CD14-positive monocyte (primary cell): ENCODE measurements at regions of chr9 and their contacts with region 1.

Region 1: DNA sequence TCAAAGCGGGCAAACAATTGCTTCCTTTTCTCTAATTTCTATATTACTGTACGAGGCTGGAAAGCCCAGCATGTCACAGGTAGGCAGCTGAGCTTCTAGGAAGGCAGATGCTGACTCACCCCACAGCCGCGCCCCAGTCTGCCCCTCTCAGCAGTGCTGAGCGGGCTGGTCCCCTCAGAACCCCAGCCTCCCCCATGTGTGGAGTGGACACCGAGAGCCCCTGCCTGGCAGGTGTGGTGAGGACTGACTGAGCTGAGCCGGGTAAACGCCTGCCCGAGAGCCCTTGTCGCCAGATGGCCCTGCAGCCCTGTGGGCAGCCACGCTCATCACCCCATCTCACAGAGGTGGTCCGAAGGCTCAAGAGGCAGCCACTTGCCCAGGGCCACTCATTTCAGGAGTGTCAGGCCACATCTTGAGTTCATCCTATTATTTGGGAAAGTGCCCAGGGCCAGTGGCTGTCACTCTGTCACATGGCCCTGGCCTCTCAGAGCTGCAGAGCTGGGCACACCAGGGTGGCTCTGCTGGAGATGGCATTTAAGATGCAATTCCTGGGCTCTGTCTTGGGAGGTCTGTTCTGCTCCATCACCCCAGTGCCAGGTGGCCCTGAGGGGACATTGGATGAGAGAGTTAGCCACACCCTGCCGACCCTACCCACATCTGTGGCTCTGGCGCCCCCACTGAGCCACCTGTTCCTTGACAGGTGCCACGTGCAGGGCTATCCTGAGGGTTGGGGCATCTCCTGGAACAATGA is 12.4 kb downstream of the CARD19 start:
- DNase-seq: peak in 1 of 3 donors; percentile 70
- H3K4me3 ChIP-seq: no peak overlapping the region
- H3K4me3 Mint-ChIP-seq: peak overlapping the region in 1 of 2 donors; percentile 27
- H3K27ac ChIP-seq: peak overlapping the region; percentile 98 to 100
- H3K27ac Mint-ChIP-seq: peak overlapping the region; percentile 97 to 100 (median 99)
- H3K4me1 ChIP-seq: peaks cover 53 to 64% of the 10 kb centered on the region in 2 donors
- H3K4me1 Mint-ChIP-seq: peaks cover 87% of the 10 kb centered on the region
- H3K27me3 ChIP-seq: no peaks in the 10 kb centered on the region
- H3K27me3 Mint-ChIP-seq: peaks cover 0 to 3% (median 0%) of the 10 kb centered on the region in 3 donors
- CTCF ChIP-seq: no peak

Region 2: DNA sequence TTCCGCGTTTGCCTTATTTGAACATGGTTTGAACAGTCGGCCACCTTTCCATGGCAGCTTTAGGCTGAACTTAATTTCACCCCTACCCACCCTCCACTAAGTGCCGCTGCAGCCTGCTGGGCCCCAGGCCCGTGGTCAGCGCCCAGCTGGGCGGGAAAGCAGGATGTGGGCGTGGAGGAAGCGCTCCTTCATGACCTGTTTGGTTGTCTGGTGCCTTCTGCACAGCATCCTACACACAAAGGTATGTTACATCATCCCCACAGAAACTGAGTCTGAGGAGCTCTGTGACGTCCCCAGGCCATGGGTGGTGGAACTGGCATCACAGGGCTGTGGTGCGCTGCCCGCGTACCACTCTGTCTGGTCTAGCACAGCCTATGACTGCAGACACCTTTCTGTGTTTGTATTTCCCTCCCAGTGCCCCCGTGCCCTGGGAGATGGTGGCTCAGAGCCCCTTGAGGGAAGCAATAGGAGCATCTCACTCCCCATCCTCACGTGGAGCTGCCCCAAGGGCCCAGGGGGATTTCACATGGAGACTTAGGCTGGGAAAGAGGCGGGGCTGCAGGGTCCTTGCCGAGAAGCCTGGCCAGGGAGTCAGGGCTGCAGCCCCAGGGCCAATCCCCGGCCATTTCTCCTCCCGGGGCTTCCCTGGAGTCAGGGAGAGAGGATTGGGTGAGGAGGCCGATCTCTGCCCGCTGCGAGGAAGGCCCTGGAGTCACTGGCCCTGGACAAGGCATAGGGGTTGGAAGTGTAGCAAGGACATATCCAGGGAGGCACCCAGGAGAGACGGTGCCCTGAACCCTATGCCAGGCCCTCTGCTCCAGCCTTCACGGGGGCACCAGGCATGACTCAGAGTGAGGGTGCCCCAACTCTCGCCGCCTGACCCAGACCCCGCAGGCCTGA is 87.4 kb before region 1 on chr9:
- intact Hi-C with region 1: no loop called
- DNase-seq: no peak
- H3K4me3 ChIP-seq: no peak overlapping the region
- H3K4me3 Mint-ChIP-seq: no peak overlapping the region
- H3K27ac ChIP-seq: peak overlapping the region in 1 of 2 donors; percentile 53
- H3K27ac Mint-ChIP-seq: peak overlapping the region in 2 of 7 donors; percentile 40 to 72
- H3K4me1 ChIP-seq: peaks cover 22 to 27% of the 10 kb centered on the region in 2 donors
- H3K4me1 Mint-ChIP-seq: peaks cover 32% of the 10 kb centered on the region
- H3K27me3 ChIP-seq: no peaks in the 10 kb centered on the region
- H3K27me3 Mint-ChIP-seq: peaks cover 0 to 1% (median 0%) of the 10 kb centered on the region in 3 donors
- CTCF ChIP-seq: no peak

Region 3: GRCh38 chr9:93154315-93154903 is 45.9 kb after region 1 on chr9:
- intact Hi-C with region 1: loop called in 1 of 2 experiments (anchors 5 kb)
- DNase-seq: peak in 2 of 3 donors; percentile 42 to 63
- H3K4me3 ChIP-seq: no peak overlapping the region
- H3K4me3 Mint-ChIP-seq: no peak overlapping the region
- H3K27ac ChIP-seq: no peak overlapping the region
- H3K27ac Mint-ChIP-seq: peak overlapping the region in 1 of 7 donors; percentile 64
- H3K4me1 ChIP-seq: peaks cover 0 to 3% of the 10 kb centered on the region in 2 donors
- H3K4me1 Mint-ChIP-seq: peaks cover 6% of the 10 kb centered on the region
- H3K27me3 ChIP-seq: no peaks in the 10 kb centered on the region
- H3K27me3 Mint-ChIP-seq: peaks cover 0 to 3% (median 0%) of the 10 kb centered on the region in 3 donors
- CTCF ChIP-seq: peak; percentile 76

Region 4: DNA sequence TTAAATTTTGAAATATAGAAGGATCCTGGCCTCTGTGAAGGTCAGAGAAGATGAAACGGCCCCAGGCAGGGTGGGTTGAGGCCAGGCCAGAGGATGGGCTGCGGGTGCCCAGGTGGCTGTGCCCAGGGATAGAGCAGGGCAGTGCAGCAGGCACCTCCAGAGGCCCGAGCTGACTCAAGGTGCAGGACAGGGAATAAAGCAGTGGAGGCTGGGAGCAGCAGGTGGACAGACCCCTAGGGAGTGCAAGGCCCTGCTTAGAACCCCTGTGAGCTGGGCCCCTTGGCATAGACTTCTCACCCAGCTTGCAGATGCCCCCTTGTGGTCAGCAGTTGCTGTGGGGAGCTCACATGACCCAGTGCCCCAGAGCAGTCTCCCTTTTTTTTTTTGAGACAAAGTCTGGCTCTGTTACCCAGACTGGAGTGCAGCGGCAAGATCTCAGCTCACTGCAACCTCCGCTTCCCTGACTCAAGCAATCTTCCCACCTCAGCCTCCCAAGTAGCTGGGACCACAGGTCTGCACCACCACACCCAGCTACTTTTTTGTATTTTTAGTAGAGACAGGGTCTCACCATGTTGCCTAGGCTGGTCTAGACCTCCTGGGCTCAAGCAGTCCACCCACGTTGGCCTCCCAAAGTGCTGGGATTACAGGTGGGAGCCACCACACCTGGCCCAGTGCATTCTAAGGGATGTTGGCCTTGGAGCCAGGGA is 194.2 kb after region 1 on chr9:
- intact Hi-C with region 1: loop called (anchors 10 kb)
- DNase-seq: peak; percentile 54 to 70 (median 58)
- H3K4me3 ChIP-seq: no peak overlapping the region
- H3K4me3 Mint-ChIP-seq: no peak overlapping the region
- H3K27ac ChIP-seq: no peak overlapping the region
- H3K27ac Mint-ChIP-seq: peak overlapping the region in 2 of 7 donors; percentile 52 to 65
- H3K4me1 ChIP-seq: peaks cover 9 to 11% of the 10 kb centered on the region in 2 donors
- H3K4me1 Mint-ChIP-seq: peaks cover 9% of the 10 kb centered on the region
- H3K27me3 ChIP-seq: no peaks in the 10 kb centered on the region
- H3K27me3 Mint-ChIP-seq: peaks cover 3 to 11% (median 8%) of the 10 kb centered on the region in 3 donors
- CTCF ChIP-seq: peak; percentile 77